H1 (cell line): ENCODE measurements at regions of chr15 and their contacts with region 1.

Region 1: GRCh38 chr15:62549345-62549970 is 384.4 kb upstream of the C2CD4B start:
- DNase-seq: no peak
- H3K4me3 ChIP-seq: no peak overlapping the region
- H3K27ac ChIP-seq: no peak overlapping the region
- H3K4me1 ChIP-seq: no peaks in the 10 kb centered on the region
- H3K27me3 ChIP-seq: no peaks in the 10 kb centered on the region
- CTCF ChIP-seq: peak; percentile 58 to 75 (median 59)
- EP300 ChIP-seq: no peak
- POLR2A ChIP-seq: no peak
- RAD21 ChIP-seq: peak; percentile 63 to 71

Region 2: DNA sequence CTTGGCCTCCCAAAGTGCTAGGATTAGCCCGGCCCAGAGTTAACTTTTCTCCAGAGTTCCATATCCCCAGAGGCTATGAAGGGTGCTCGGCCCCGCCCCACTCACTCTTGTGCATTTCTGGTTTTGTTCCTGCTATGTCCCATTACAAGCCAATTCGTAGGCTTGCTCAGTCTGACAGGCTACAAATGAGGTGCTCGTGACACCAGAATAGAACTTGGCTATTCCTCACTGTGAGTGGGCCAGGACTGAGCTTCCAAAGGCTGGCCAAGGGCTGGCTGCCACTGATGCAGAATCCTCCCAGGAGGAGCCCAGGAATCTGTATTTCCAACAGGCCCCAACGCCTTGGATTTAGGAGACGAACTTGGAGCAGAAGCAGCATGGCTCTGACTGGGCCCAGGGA is 101.7 kb before region 1 on chr15:
- CTCF ChIA-PET with region 1: interaction called, 19 read pairs
- POLR2A ChIA-PET with region 1: no interaction called
- DNase-seq: no peak
- H3K4me3 ChIP-seq: no peak overlapping the region
- H3K27ac ChIP-seq: no peak overlapping the region
- H3K4me1 ChIP-seq: peaks cover 4 to 8% (median 6%) of the 10 kb centered on the region in 4 experiments; a peak in 5 of 7 replicates
- H3K27me3 ChIP-seq: no peaks in the 10 kb centered on the region; a peak in 1 of 7 replicates
- CTCF ChIP-seq: no peak
- EP300 ChIP-seq: no peak
- POLR2A ChIP-seq: no peak
- RAD21 ChIP-seq: no peak

Region 3: DNA sequence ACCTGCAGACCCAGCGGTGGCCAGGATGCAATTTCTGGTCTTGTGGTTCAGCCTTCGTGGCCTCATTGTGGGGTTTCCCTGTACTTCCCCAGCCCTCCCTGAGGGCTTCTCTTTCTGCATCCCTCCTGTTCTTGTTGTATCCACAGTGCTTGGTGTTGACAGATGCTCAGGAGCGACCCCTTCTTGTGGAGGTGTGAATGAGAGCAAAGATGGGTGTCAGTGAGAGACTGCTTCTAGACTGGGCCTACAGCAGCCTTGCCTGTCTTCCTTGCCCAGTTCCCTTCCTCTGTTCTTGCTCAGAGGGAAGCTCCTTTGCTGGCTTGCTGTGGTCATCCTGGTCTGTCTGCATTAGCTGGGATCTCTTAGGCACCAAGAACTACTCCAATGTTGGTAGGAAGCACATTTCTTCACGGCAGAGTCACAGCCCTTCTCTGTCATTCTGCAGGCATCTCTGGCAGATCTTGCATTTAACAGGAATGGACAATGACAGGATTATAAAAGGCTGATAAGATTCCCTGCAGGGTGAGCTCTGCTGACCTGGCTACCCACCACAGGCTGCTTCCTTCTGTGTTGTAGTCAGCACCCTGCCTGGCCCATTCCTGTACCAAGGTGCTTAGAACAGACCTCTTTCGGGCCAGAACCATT is 66.6 kb before region 1 on chr15:
- CTCF ChIA-PET with region 1: interaction called, 10 read pairs
- POLR2A ChIA-PET with region 1: no interaction called
- DNase-seq: peak; percentile 39 to 75
- H3K4me3 ChIP-seq: no peak overlapping the region
- H3K27ac ChIP-seq: no peak overlapping the region
- H3K4me1 ChIP-seq: peaks cover 0 to 6% (median 2%) of the 10 kb centered on the region in 4 experiments; a peak in 3 of 7 replicates
- H3K27me3 ChIP-seq: no peaks in the 10 kb centered on the region; a peak in 1 of 7 replicates
- CTCF ChIP-seq: peak; percentile 67 to 93 (median 73)
- EP300 ChIP-seq: no peak
- POLR2A ChIP-seq: no peak
- RAD21 ChIP-seq: peak; percentile 67 to 79

Region 4: GRCh38 chr15:62524848-62525247 is 24.6 kb before region 1 on chr15:
- CTCF ChIA-PET with region 1: interaction called, 34 read pairs
- POLR2A ChIA-PET with region 1: no interaction called
- DNase-seq: no peak
- H3K4me3 ChIP-seq: no peak overlapping the region
- H3K27ac ChIP-seq: no peak overlapping the region
- H3K4me1 ChIP-seq: peaks cover 4 to 18% (median 14%) of the 10 kb centered on the region in 4 experiments; a peak in 6 of 7 replicates
- H3K27me3 ChIP-seq: no peaks in the 10 kb centered on the region
- CTCF ChIP-seq: no peak
- EP300 ChIP-seq: no peak
- POLR2A ChIP-seq: no peak
- RAD21 ChIP-seq: no peak

Region 5: DNA sequence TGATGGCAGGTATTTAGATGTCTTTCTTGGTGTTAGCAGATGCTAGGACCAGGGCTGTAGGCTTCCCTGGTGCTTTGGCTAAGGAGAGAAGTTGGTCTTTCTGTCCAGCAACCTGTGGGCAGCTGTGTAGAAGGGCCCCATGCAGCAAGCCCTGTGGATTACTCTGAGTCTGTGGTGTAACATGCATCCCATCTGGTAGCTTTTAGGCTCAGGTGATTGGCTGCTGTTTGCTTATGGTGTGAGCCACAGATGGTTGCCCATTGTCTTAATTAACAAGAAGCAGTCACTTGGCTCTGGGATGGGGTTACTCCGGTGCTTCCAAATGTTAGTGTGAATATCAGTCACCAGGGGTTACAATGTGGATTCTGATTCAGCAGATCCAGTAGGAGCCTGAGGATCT is 15.8 kb before region 1 on chr15:
- CTCF ChIA-PET with region 1: interaction called, 22 read pairs
- POLR2A ChIA-PET with region 1: no interaction called
- DNase-seq: no peak
- H3K4me3 ChIP-seq: no peak overlapping the region
- H3K27ac ChIP-seq: no peak overlapping the region
- H3K4me1 ChIP-seq: peaks cover 0 to 3% (median 0%) of the 10 kb centered on the region in 4 experiments; a peak in 3 of 7 replicates
- H3K27me3 ChIP-seq: no peaks in the 10 kb centered on the region
- CTCF ChIP-seq: no peak
- EP300 ChIP-seq: no peak
- POLR2A ChIP-seq: no peak
- RAD21 ChIP-seq: no peak

Region 6: GRCh38 chr15:62539236-62539635 is 10.2 kb before region 1 on chr15:
- CTCF ChIA-PET with region 1: interaction called, 22 read pairs
- POLR2A ChIA-PET with region 1: no interaction called
- DNase-seq: no peak
- H3K4me3 ChIP-seq: no peak overlapping the region
- H3K27ac ChIP-seq: no peak overlapping the region
- H3K4me1 ChIP-seq: no peaks in the 10 kb centered on the region
- H3K27me3 ChIP-seq: no peaks in the 10 kb centered on the region
- CTCF ChIP-seq: no peak
- EP300 ChIP-seq: no peak
- POLR2A ChIP-seq: no peak
- RAD21 ChIP-seq: no peak

Region 7: GRCh38 chr15:62569460-62570412 is 20.3 kb after region 1 on chr15:
- CTCF ChIA-PET with region 1: interaction called, 46 read pairs
- POLR2A ChIA-PET with region 1: interaction called, 3 read pairs
- DNase-seq: no peak
- H3K4me3 ChIP-seq: no peak overlapping the region
- H3K27ac ChIP-seq: no peak overlapping the region
- H3K4me1 ChIP-seq: peaks cover 0 to 3% (median 1%) of the 10 kb centered on the region in 4 experiments; a peak in 2 of 7 replicates
- H3K27me3 ChIP-seq: no peaks in the 10 kb centered on the region; a peak in 1 of 7 replicates
- CTCF ChIP-seq: no peak
- EP300 ChIP-seq: no peak
- POLR2A ChIP-seq: no peak
- RAD21 ChIP-seq: no peak